Heart left ventricle (tissue), 16 donors: ENCODE measurements at regions of chr9 and their contacts with region 1.

Region 1: GRCh38 chr9:121538246-121538645 is 38.6 kb upstream of the GGTA1 start:
- DNase-seq: no peak
- ATAC-seq: peak; percentile 39 to 64 (median 49)
- H3K4me3 ChIP-seq: no peak overlapping the region
- H3K27ac ChIP-seq: no peak overlapping the region
- H3K4me1 ChIP-seq: peaks cover 0 to 18% (median 8%) of the 10 kb centered on the region in 12 donors
- H3K27me3 ChIP-seq: no peaks in the 10 kb centered on the region
- CTCF ChIP-seq: peak in 9 of 12 donors; percentile 10 to 52 (median 25)
- POLR2A ChIP-seq: no peak

Region 2: GRCh38 chr9:121463026-121463807 is 75.0 kb before region 1 on chr9:
- intact Hi-C with region 1: loop called in 5 of 10 experiments (anchors 1 to 5 kb)
- DNase-seq: peak; percentile 51 to 73 (median 59)
- ATAC-seq: peak in 3 of 4 donors; percentile 58 to 81 (median 65)
- H3K4me3 ChIP-seq: no peak overlapping the region
- H3K27ac ChIP-seq: no peak overlapping the region
- H3K4me1 ChIP-seq: peaks cover 0 to 24% (median 9%) of the 10 kb centered on the region in 12 donors
- H3K27me3 ChIP-seq: no peaks in the 10 kb centered on the region
- CTCF ChIP-seq: peak; percentile 63 to 88 (median 80)
- POLR2A ChIP-seq: no peak